Caki2 (cell line): ENCODE measurements at regions of chr17 and their contacts with region 1.

Region 1: GRCh38 chr17:57927048-57927723 is 28.0 kb downstream of the CUEDC1 start:
- DNase-seq: peak; percentile 81

Region 2: DNA sequence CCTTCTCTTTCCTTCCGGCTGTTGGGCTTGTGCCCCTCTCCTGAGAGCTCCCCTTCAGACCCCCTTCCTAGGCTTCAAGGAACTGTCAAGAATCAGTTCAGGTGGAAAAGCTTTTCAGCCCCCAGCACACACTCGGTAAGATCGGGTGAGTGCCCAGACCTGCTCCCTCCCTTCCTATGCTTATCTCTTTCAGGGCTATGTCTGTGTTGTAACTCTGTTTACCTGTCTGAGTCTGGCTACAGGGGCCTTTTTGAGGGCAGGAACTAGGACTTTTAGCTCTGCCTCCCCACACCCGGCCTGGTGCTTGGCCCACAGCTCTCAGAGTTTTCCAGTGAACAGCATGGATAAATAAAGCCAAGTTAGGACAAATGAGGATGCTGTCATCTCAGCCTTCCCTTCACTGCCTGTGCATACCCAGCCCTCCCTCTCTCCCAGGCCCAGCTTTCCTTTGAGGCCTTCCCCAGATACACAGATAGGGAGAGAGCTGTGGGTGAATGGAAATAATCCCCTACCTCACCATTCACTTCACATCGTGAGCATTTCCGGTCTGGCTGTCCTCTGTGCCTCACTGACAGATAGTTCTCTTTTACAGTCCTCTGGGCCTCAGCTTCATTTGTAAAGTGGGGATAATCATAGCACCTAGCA is 71.7 kb before region 1 on chr17:
- in situ Hi-C with region 1: loop called (anchors 5 kb)
- DNase-seq: no peak

Region 3: GRCh38 chr17:57970706-57971105 is 43.5 kb after region 1 on chr17:
- in situ Hi-C with region 1: no loop called
- DNase-seq: peak; percentile 39

Region 4: GRCh38 chr17:57995076-57995956 is 68.1 kb after region 1 on chr17:
- in situ Hi-C with region 1: loop called (anchors 10 kb)
- DNase-seq: peak; percentile 71